Left ventricle myocardium superior (tissue), 1 donor: ENCODE measurements at regions of chr15 and their contacts with region 1.

Region 1: DNA sequence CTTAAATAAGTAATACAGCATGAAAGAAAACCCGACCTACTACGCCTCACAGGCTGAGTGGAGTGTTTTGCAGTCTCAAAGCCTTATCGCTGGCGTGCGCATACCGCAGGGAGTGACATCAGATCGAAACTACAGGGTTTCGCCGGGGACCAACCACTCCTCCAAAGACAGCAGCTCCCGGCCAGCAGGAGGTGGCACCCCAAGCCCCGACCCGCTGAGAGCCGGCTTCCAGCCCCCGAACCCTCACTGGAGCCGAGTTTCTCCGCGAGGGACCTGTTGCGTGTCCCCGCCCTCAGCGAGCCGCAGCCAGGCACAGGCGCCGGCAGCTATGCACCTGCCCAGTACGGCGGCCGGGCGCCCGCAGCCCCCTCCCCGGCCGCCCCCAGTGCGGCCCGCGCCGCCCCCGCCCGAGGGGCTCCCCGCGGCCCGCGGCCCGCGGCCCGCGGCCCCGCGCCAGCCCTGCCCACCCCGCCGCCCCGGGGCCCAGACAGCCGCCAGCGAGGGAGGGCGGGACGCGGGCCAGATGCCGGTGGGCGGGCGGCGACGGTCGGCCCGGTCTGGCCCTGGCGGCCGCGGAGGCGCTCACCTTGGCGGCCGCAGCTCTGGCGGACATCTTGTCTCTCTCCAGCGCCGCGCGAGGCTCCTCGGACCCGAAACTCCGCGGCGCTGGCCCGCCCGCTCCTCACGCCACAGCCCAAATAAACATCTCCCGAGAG is 694 bp downstream of the TJP1 start:
- DNase-seq: peak; percentile 80
- ATAC-seq: peak; percentile 62

Region 2: GRCh38 chr15:29888646-29889045 is 67.1 kb after region 1 on chr15:
- intact Hi-C with region 1: loop called (anchors 10 kb)
- DNase-seq: no peak
- ATAC-seq: peak; percentile 93